MCF 10A (cell line): ENCODE measurements at regions of chr22 and their contacts with region 1.

Region 1: GRCh38 chr22:25747245-25747944 is 5.4 kb downstream of the MYO18B start:
- DNase-seq: peak; percentile 99
- H3K4me3 Mint-ChIP-seq: peak overlapping the region; percentile 40
- H3K27ac Mint-ChIP-seq: peak overlapping the region; percentile 76
- H3K4me1 Mint-ChIP-seq: peaks cover 43% of the 10 kb centered on the region
- H3K27me3 Mint-ChIP-seq: no peaks in the 10 kb centered on the region
- CTCF ChIP-seq: no peak

Region 2: GRCh38 chr22:25627271-25627852 is 120.0 kb before region 1 on chr22:
- CTCF ChIA-PET with region 1: no interaction called
- POLR2A ChIA-PET with region 1: no interaction called
- intact Hi-C with region 1: no loop called
- DNase-seq: no peak
- H3K4me3 Mint-ChIP-seq: no peak overlapping the region
- H3K27ac Mint-ChIP-seq: no peak overlapping the region
- H3K4me1 Mint-ChIP-seq: no peaks in the 10 kb centered on the region
- H3K27me3 Mint-ChIP-seq: no peaks in the 10 kb centered on the region
- CTCF ChIP-seq: no peak

Region 3: DNA sequence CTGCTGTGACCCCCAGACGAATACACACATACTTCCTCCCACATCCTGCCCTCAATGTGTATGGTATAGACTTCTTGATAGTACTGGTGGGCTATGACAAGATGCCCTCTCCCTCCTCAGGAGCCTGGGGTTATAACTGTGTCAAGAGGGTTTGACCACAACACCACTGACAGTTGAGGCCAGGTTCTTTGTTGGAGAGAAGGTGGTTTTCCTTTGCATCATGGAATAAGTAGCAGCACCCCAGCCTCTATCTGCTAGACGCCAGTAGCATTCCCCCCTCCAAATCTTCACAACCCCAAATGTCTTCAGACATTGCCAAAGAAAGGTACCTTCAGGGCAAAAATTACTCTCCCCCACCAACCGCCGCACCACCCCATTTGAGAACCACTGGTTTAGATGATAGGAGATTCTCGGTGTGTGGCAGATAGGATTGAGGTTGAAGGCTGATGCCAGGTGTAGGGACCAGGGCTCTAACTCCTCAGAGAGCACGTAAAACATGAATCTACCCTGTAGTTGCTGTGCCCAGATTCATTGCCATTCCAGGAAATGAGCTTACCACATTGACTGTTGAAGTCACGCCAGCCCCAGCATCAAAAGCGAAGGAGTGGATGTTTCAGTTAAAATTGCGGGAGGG is 10.9 kb before region 1 on chr22:
- CTCF ChIA-PET with region 1: interaction called, 11 read pairs
- POLR2A ChIA-PET with region 1: no interaction called
- intact Hi-C with region 1: no loop called
- DNase-seq: no peak
- H3K4me3 Mint-ChIP-seq: no peak overlapping the region
- H3K27ac Mint-ChIP-seq: no peak overlapping the region
- H3K4me1 Mint-ChIP-seq: no peaks in the 10 kb centered on the region
- H3K27me3 Mint-ChIP-seq: no peaks in the 10 kb centered on the region
- CTCF ChIP-seq: no peak

Region 4: GRCh38 chr22:25759825-25760231 is 12.4 kb after region 1 on chr22:
- CTCF ChIA-PET with region 1: interaction called, 3 read pairs
- POLR2A ChIA-PET with region 1: interaction called, 19 read pairs
- intact Hi-C with region 1: loop called (anchors 2 kb)
- DNase-seq: peak; percentile 87
- H3K4me3 Mint-ChIP-seq: no peak overlapping the region
- H3K27ac Mint-ChIP-seq: peak overlapping the region; percentile 75
- H3K4me1 Mint-ChIP-seq: peaks cover 27% of the 10 kb centered on the region
- H3K27me3 Mint-ChIP-seq: no peaks in the 10 kb centered on the region
- CTCF ChIP-seq: no peak

Region 5: GRCh38 chr22:26330966-26331625 is 583.7 kb after region 1 on chr22:
- CTCF ChIA-PET with region 1: no interaction called
- POLR2A ChIA-PET with region 1: no interaction called
- intact Hi-C with region 1: no loop called
- DNase-seq: peak; percentile 70
- H3K4me3 Mint-ChIP-seq: no peak overlapping the region
- H3K27ac Mint-ChIP-seq: no peak overlapping the region
- H3K4me1 Mint-ChIP-seq: no peaks in the 10 kb centered on the region
- H3K27me3 Mint-ChIP-seq: peaks cover 31% of the 10 kb centered on the region
- CTCF ChIP-seq: peak; percentile 96